Dendritic cell treated with granulocyte-macrophage colony-stimulating factor and Interleukin-4, amounts not matched to agents 40 ng/mL and 50 ng/mL, for 4 days (primary cell): ENCODE measurements at regions of chr9 and their contacts with region 1.

Region 1: GRCh38 chr9:128094166-128094967 is 26.3 kb downstream of the SLC25A25 start:
- H3K4me3 Mint-ChIP-seq: peak overlapping the region; percentile 64
- H3K27ac Mint-ChIP-seq: peak overlapping the region; percentile 96
- H3K4me1 Mint-ChIP-seq: peaks cover 86% of the 10 kb centered on the region
- H3K27me3 Mint-ChIP-seq: no peaks in the 10 kb centered on the region

Region 2: GRCh38 chr9:128053560-128053959 is 40.8 kb before region 1 on chr9:
- intact Hi-C with region 1: loop called (anchors 5 kb)
- H3K4me3 Mint-ChIP-seq: no peak overlapping the region
- H3K27ac Mint-ChIP-seq: peak overlapping the region; percentile 93
- H3K4me1 Mint-ChIP-seq: peaks cover 58% of the 10 kb centered on the region
- H3K27me3 Mint-ChIP-seq: no peaks in the 10 kb centered on the region

Region 3: DNA sequence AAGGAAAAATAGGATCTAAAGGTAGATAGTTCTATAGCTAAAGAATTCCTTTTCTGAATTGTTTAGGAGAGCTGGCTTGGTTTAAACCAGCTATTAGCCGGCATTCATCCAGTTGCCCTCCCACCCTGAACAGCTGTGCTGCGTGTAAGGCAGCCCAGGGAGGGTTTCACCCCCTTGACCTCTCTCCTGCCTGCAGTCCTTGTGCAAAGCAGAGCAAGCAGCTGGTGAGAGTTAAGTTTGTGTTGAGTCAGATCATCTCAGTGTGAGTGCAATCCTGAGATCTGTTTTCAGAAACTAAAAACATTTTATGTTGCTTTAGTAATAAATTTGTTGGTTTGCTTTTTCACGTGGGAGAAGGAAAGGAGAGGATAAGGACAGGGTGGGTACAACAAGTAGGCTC is 13.3 kb before region 1 on chr9:
- intact Hi-C with region 1: loop called (anchors 2 kb)
- H3K4me3 Mint-ChIP-seq: no peak overlapping the region
- H3K27ac Mint-ChIP-seq: peak overlapping the region; percentile 63
- H3K4me1 Mint-ChIP-seq: peaks cover 57% of the 10 kb centered on the region
- H3K27me3 Mint-ChIP-seq: no peaks in the 10 kb centered on the region

Region 4: DNA sequence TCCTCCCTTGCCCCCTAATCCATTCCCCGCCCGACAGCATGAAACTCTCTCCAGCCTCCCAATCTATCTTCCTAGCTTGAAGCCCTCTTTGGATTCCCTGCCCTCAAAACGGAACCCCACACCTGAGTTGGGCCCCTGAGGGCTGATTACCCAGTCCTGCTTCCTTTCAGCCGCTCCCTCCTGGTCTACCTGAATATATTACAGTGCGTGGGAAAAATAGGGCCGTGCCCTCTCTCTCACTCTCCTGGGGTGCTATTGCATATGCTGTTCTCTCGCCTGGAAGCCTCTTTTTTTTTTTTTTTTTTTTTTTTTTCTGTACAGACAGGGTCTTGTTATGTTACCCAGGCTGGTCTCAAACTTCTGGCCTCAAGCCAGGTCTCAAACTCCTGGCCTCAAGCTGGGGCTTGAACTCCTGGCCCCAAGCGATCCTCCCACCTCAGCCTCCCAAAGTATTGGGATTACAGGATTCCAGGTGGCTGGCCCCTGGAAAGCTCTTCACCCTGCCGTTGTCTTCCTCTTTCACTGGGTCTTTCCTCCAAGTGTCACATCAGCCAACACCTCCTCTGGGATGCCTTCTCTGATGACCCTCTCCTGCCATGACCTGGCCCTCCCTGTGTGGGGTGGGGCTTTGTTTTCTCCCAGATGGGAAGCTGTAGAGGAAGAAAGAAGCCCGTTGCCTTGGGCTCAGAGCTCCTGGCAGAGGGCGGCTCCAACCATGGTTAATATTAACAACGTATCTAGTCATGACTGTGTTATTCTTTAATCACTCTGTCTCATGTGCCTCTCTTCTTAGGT is 117.0 kb after region 1 on chr9:
- intact Hi-C with region 1: no loop called
- H3K4me3 Mint-ChIP-seq: no peak overlapping the region
- H3K27ac Mint-ChIP-seq: no peak overlapping the region
- H3K4me1 Mint-ChIP-seq: peaks cover 34% of the 10 kb centered on the region
- H3K27me3 Mint-ChIP-seq: peaks cover 35% of the 10 kb centered on the region